Mucosa of descending colon (tissue), 3 donors: ENCODE measurements at regions of chr10 and their contacts with region 1.

Region 1: GRCh38 chr10:28381903-28382347 is 79.1 kb upstream of the MPP7 start:
- DNase-seq: peak in 2 of 3 donors; percentile 72 to 96
- ATAC-seq: peak; percentile 97
- H3K4me3 ChIP-seq: no peak overlapping the region
- H3K4me1 ChIP-seq: no peaks in the 10 kb centered on the region
- CTCF ChIP-seq: peak; percentile 80

Region 2: GRCh38 chr10:28250782-28251181 is 131.1 kb before region 1 on chr10:
- intact Hi-C with region 1: loop called (anchors 5 kb)
- DNase-seq: no peak
- ATAC-seq: no peak
- H3K4me3 ChIP-seq: no peak overlapping the region
- H3K4me1 ChIP-seq: peaks cover 2% of the 10 kb centered on the region
- CTCF ChIP-seq: no peak

Region 3: DNA sequence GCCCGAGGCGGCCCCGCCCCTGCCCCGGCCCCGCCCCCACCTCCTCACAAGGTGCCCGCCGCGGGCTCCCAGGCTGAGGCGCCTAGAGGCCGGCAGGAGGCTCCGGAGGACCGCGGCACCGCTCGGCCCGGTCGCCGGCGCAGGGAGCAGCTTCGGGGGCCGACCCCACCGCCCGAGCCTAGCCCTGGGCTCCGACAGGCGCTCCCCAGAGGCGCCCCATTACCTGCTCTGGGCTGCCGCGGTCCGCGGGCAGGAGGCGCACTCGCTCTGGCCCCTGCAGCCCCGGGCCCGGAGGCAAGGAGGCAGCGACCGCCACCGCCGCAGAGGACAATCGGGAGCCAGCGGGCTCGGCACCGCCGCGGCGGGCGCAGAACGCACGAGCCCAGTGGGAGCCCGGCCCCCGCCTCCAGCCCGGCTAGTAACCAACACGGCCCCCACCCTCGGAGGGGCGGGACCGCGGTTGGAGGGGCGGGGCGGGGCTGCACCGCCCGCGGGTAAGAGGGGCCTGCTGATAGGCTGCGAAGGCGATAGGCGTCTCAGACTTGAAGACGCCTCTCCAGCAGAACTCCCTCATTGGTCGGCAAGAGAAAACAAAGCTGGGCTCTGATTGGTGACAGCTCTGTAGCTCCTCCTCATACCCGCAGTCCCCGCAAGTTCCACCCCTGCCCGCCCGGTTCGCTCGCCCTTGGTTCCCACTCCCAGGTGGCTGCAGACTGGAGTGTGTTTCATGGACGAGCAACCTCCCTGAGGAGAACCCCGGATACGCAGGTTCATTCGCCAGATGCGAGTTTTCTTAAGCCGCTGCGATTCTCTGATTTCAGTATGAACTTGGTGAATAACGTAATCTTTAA is 79.1 kb before region 1 on chr10 and contains the start of gene MPP7:
- intact Hi-C with region 1: loop called (anchors 10 kb)
- DNase-seq: peak; percentile 96 to 97 (median 97)
- ATAC-seq: peak; percentile 98
- H3K4me3 ChIP-seq: peak within 1 kb of the TSS; percentile 70
- H3K4me1 ChIP-seq: no peaks in the 10 kb centered on the region
- CTCF ChIP-seq: peak; percentile 33
- total RNA-seq, gene MPP7: 32.7 to 45.8 (median 38.7) TPM